ENCODE measurements at regions of chr20 and their contacts with region 1.

Region 1: DNA sequence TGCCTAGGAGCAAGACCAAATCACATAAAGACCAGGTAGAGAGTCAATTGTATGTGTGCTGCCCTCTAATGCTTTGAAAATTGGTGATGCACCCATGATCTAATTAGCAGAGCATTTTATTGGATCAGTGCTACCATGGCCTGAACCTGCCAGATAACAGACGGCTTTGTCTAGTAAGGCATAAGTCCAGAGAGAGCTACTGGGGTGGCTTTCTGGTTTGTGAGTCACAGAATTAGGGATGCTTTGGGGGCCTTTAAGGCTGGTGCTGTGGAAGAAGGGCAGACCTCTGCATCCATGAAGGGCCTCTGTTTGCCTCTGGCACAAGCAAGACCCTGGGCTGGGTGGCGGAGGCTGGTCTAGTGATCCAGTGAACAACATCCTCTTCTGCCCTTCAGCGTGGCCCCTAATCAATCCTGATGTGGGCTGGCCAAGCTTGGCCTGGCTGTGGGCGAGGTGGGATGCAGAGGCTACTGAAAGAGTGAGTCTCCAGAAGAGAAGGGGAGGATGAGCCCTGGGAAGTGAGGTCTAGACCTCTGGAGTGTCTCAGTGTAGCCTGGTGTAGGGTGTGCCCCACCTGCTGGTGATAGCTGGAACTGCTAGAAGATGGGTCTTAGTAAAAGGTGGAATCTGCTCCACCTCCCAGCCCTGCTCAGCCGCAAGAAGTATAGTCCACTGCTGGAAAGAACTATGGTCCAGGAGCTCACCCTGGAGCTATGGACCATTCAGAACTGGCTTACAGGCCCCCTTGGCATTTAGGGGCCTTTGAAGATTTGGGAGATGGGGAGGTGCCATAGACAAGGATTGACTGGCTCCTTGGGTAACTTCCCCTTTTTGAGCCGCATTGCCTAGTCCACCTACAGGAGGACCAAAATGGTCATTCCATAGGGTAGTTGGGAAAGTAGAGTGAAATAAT is 36.7 kb upstream of the AAR2 start:
- DNase-seq: peak; percentile 84 to 98 (median 94)
- H3K4me3 ChIP-seq: no peak overlapping the region
- H3K27ac ChIP-seq: peak overlapping the region in 2 of 5 donors; percentile 44 to 80
- H3K4me1 ChIP-seq: peaks cover 18 to 33% of the 10 kb centered on the region in 2 donors
- H3K27me3 ChIP-seq: no peaks in the 10 kb centered on the region
- CTCF ChIP-seq: peak; percentile 89 to 95 (median 94)
- POLR2A ChIP-seq: no peak

Region 2: DNA sequence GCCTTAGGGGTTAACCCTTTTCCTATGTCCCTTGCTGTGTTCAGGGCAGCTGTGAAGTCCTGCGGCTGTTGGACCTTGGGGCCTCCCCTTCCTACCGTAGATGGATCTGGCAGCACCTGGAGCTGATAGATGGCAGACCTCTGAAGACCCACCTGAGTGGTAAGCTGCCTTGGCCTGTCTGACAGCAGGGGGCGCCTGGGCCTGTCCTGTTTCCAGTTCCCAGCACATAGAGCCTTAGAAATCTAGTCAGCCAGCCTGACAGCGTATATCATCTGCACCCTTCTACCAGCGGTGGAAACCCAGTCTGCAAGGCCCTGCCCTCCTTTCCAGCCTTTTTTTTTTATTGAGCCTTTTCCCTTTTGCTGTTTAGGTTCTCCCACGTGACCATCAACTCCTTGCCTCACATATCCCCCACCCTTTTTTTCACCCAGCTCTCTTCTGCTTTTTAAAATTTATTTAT is 204.6 kb before region 1 on chr20:
- intact Hi-C with region 1: loop called in 1 of 2 experiments (anchors 5 kb)
- DNase-seq: peak; percentile 78 to 93 (median 87)
- H3K4me3 ChIP-seq: no peak overlapping the region
- H3K27ac ChIP-seq: no peak overlapping the region
- H3K4me1 ChIP-seq: no peaks in the 10 kb centered on the region
- H3K27me3 ChIP-seq: no peaks in the 10 kb centered on the region
- CTCF ChIP-seq: peak; percentile 83 to 93 (median 90)
- POLR2A ChIP-seq: no peak

Region 3: DNA sequence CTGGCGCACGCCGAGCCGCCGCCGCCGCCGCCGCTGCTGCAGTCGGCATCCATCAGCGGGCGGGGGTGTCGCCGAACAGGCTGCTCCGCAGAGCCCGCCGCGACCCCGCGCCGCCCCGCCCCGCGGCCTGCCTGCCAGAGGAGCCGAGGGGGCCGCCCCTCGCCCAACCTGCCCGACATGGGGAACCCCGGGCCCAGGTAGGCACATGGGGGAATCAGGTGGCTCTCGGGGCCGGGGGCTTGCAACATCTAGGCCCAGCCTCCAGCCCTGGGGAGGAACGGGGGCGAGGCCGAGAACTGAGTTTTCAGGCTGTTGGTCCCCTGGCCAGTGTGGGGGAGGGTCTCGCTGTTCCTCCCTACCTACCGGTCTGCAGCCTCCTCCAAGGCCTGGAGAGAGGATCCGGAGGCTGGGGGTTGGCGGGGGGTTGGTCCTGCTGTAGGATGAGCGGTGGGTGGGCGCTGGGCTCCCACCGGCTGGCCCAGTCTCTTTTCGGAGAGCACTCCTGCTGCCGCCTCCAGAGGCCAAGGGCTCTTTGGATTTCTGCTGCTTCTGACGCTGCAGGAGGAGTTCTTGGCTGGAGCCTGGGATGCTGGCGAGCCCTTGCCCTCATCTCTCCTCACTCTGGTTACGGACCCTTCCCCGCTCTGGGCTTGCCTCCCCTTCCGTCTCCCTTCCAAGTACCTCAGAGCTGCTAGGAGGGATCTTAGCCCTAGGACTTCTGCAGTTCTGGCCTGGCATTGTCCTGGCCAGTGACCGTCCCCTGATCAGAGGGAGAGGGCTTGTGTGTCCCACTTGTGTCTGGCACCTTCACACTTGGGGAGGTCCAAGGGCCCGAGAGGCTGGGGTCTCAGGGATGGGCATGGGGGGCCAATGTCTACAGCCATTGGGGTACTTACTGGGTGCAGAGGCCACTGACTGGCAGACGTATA is 44.6 kb before region 1 on chr20 and contains the start of gene EPB41L1:
- intact Hi-C with region 1: loop called (anchors 5 kb)
- DNase-seq: peak in 5 of 7 donors; percentile 48 to 67 (median 61)
- H3K4me3 ChIP-seq: peak within 1 kb of the TSS; percentile 11 to 85 (median 59)
- H3K27ac ChIP-seq: peak within 1 kb of the TSS; percentile 66 to 94 (median 86)
- H3K4me1 ChIP-seq: peaks cover 30 to 76% of the 10 kb centered on the region in 2 donors
- H3K27me3 ChIP-seq: no peaks in the 10 kb centered on the region
- CTCF ChIP-seq: no peak
- POLR2A ChIP-seq: peak in 1 of 2 donors; percentile 65
- total RNA-seq, gene EPB41L1: 105 to 813 (median 165) TPM

Region 4: GRCh38 chr20:36274181-36274841 is 74.7 kb after region 1 on chr20:
- intact Hi-C with region 1: no loop called
- DNase-seq: peak in 1 of 7 donors; percentile 54
- H3K4me3 ChIP-seq: no peak overlapping the region
- H3K27ac ChIP-seq: no peak overlapping the region
- H3K4me1 ChIP-seq: no peaks in the 10 kb centered on the region
- H3K27me3 ChIP-seq: no peaks in the 10 kb centered on the region
- CTCF ChIP-seq: no peak
- POLR2A ChIP-seq: no peak